ENCODE measurements at regions of chr2 and their contacts with region 1.

Region 1: DNA sequence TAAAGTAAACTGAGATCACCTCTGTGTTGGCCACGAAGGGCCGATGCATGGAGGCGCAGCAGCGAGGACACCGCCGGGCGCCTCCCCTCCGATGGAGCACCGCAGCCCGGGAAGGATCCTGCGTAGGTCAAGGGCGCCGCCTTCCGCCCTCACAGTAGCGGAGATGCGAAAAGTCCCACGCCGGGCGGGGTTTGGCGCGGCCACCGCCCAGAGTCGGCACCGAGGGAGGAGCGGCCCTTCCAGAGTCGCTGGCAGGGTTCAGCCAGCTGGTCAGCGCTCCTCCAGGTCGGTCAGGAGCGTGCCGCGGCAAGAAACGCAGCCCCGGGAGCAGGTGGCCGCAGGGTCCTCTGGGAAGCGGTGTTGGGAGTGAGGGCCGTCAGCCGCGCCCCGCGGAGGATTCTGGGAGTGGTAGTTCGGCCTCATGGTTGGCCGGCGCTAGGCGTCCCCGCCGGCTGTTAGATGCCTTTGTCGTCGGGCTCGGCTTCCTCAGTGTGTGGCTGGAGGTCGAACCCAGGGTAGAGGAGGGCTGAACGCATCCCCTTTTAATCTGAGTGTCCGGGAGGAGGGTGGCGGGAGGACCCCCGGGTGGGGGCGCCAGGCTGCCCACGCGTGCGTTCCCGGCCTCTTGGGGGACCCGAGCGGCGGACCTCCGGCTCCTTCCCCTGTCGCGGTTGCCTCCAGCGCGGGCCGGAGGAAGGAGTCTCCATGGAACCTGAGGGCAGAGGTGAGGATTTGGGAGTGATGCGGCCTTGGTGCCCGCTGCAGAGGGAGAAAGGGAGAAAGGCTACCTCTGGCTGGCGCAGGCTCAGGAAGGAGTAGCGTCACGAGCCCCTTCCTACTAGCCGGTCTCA is at the start of gene ZNF892:
- DNase-seq: peak; percentile 91
- ATAC-seq: peak; percentile 98
- H3K4me3 Mint-ChIP-seq: peak within 1 kb of the TSS; percentile 87
- H3K27ac Mint-ChIP-seq: peak within 1 kb of the TSS; percentile 68
- H3K4me1 Mint-ChIP-seq: peaks cover 17% of the 10 kb centered on the region
- H3K27me3 Mint-ChIP-seq: no peaks in the 10 kb centered on the region
- total RNA-seq, gene ZNF892: 3.2 to 3.8 TPM

Region 2: GRCh38 chr2:94776036-94776435 is 431.3 kb before region 1 on chr2:
- CTCF ChIA-PET with region 1: no interaction called
- POLR2A ChIA-PET with region 1: no interaction called
- intact Hi-C with region 1: no loop called
- DNase-seq: no peak
- ATAC-seq: no peak
- H3K4me3 Mint-ChIP-seq: no peak overlapping the region
- H3K27ac Mint-ChIP-seq: no peak overlapping the region
- H3K4me1 Mint-ChIP-seq: no peaks in the 10 kb centered on the region
- H3K27me3 Mint-ChIP-seq: peaks cover 2% of the 10 kb centered on the region

Region 3: GRCh38 chr2:95159690-95160449 is 47.5 kb before region 1 on chr2 and contains the start of gene ZNF514:
- CTCF ChIA-PET with region 1: interaction called, 3 read pairs
- POLR2A ChIA-PET with region 1: no interaction called
- intact Hi-C with region 1: loop called (anchors 1 kb)
- DNase-seq: peak; percentile 85
- ATAC-seq: peak; percentile 95
- H3K4me3 Mint-ChIP-seq: peak within 1 kb of the TSS; percentile 81
- H3K27ac Mint-ChIP-seq: peak within 1 kb of the TSS; percentile 80
- H3K4me1 Mint-ChIP-seq: peaks cover 15% of the 10 kb centered on the region
- H3K27me3 Mint-ChIP-seq: no peaks in the 10 kb centered on the region
- total RNA-seq, gene ZNF514: 7.0 to 8.8 TPM

Region 4: GRCh38 chr2:95165129-95166064 is 41.9 kb before region 1 on chr2 and contains the start of gene ZNF2:
- CTCF ChIA-PET with region 1: interaction called, 5 read pairs
- POLR2A ChIA-PET with region 1: no interaction called
- intact Hi-C with region 1: loop called (anchors 1 kb)
- DNase-seq: peak; percentile 98
- ATAC-seq: peak; percentile 98
- H3K4me3 Mint-ChIP-seq: peak within 1 kb of the TSS; percentile 96
- H3K27ac Mint-ChIP-seq: peak within 1 kb of the TSS; percentile 94
- H3K4me1 Mint-ChIP-seq: peaks cover 24% of the 10 kb centered on the region
- H3K27me3 Mint-ChIP-seq: no peaks in the 10 kb centered on the region
- total RNA-seq, gene ZNF2: 4.3 to 5.1 TPM

Region 5: DNA sequence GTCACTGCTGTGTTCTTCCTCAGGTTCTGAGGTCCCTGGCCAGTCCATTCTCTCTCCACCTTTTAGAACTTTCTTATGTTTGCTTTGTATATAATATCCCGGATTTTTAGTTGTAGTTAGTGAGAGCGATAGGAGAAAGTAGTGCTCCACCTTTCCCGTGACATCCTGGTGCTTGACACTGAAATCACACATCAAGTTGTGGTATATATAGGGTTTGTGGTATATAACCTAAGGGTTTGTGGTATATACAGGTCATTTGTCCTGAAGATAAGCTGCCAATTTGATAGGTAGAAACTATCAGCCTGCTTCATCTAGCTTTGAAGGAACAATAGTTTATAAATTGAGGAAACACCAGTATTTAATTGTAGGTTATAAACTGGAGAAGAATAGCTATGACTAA is 13.1 kb after region 1 on chr2:
- CTCF ChIA-PET with region 1: no interaction called
- POLR2A ChIA-PET with region 1: no interaction called
- intact Hi-C with region 1: no loop called
- DNase-seq: no peak
- ATAC-seq: no peak
- H3K4me3 Mint-ChIP-seq: no peak overlapping the region
- H3K27ac Mint-ChIP-seq: no peak overlapping the region
- H3K4me1 Mint-ChIP-seq: no peaks in the 10 kb centered on the region
- H3K27me3 Mint-ChIP-seq: no peaks in the 10 kb centered on the region